ENCODE measurements at regions of chr1 and their contacts with region 1.

Region 1: GRCh38 chr1:226424228-226425003 is 16.5 kb upstream of the PARP1 start:
- DNase-seq: peak in 4 of 5 donors; percentile 13 to 38 (median 34)
- H3K4me3 ChIP-seq: no peak overlapping the region
- H3K4me3 Mint-ChIP-seq: peak overlapping the region in 2 of 8 donors; percentile 22 to 42
- H3K27ac ChIP-seq: no peak overlapping the region
- H3K27ac Mint-ChIP-seq: no peak overlapping the region
- H3K4me1 ChIP-seq: peaks cover 17% of the 10 kb centered on the region
- H3K4me1 Mint-ChIP-seq: peaks cover 7 to 18% (median 9%) of the 10 kb centered on the region in 4 donors
- H3K27me3 ChIP-seq: no peaks in the 10 kb centered on the region
- H3K27me3 Mint-ChIP-seq: peaks cover 1 to 3% of the 10 kb centered on the region in 2 donors

Region 2: DNA sequence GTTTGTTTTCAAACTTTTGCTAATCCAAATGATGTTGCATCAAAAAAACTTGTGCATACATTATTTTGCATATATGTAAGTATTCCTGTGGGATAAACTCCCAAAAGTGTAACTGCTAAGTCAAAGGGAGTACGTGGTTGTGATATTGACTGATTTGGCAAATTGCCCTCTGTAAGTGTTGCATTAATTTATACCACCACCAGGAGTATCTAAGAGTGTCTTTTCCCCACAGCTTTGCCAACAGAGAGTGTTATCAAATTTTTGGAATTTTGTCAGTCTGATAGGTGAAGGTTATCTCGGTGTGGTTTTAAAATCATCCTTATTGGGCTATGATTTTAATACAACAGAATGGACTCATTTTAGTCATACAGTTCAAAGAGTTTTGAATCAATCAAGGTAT is 13.6 kb after region 1 on chr1:
- CTCF ChIA-PET with region 1: interaction called, 82 read pairs
- POLR2A ChIA-PET with region 1: interaction called, 26 read pairs
- intact Hi-C with region 1: no loop called
- DNase-seq: no peak
- H3K4me3 ChIP-seq: no peak overlapping the region
- H3K4me3 Mint-ChIP-seq: no peak overlapping the region
- H3K27ac ChIP-seq: no peak overlapping the region
- H3K27ac Mint-ChIP-seq: no peak overlapping the region
- H3K4me1 ChIP-seq: no peaks in the 10 kb centered on the region
- H3K4me1 Mint-ChIP-seq: no peaks in the 10 kb centered on the region
- H3K27me3 ChIP-seq: no peaks in the 10 kb centered on the region
- H3K27me3 Mint-ChIP-seq: no peaks in the 10 kb centered on the region

Region 3: DNA sequence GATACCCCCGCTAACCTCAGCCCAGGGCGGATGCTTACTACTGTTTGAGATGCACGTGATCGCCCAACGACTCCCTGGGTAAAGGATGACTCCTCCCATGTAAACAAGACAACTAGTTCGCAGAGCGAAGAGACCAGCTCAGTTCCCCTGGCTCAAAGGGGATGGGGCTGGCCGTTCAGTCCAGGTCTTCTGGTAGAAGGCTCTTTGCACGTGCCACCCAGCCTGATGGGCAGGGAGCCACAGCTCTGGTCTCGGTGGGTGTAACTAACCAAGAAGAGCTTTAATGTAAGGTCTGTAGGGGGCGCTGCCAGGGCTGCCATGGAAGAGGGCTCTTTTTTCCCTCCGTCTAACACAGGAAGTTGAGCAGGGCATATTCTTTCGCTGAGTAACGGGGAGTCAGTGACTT is 32.9 kb after region 1 on chr1:
- CTCF ChIA-PET with region 1: interaction called, 28 read pairs
- POLR2A ChIA-PET with region 1: interaction called, 21 read pairs
- intact Hi-C with region 1: no loop called
- DNase-seq: peak; percentile 52 to 67 (median 61)
- H3K4me3 ChIP-seq: peak overlapping the region in 1 of 2 donors; percentile 48
- H3K4me3 Mint-ChIP-seq: peak overlapping the region; percentile 74 to 92 (median 86)
- H3K27ac ChIP-seq: no peak overlapping the region
- H3K27ac Mint-ChIP-seq: peak overlapping the region; percentile 46 to 95 (median 89)
- H3K4me1 ChIP-seq: peaks cover 7% of the 10 kb centered on the region
- H3K4me1 Mint-ChIP-seq: peaks cover 7 to 14% (median 11%) of the 10 kb centered on the region in 4 donors
- H3K27me3 ChIP-seq: no peaks in the 10 kb centered on the region
- H3K27me3 Mint-ChIP-seq: peaks cover 0 to 2% of the 10 kb centered on the region in 2 donors

Region 4: DNA sequence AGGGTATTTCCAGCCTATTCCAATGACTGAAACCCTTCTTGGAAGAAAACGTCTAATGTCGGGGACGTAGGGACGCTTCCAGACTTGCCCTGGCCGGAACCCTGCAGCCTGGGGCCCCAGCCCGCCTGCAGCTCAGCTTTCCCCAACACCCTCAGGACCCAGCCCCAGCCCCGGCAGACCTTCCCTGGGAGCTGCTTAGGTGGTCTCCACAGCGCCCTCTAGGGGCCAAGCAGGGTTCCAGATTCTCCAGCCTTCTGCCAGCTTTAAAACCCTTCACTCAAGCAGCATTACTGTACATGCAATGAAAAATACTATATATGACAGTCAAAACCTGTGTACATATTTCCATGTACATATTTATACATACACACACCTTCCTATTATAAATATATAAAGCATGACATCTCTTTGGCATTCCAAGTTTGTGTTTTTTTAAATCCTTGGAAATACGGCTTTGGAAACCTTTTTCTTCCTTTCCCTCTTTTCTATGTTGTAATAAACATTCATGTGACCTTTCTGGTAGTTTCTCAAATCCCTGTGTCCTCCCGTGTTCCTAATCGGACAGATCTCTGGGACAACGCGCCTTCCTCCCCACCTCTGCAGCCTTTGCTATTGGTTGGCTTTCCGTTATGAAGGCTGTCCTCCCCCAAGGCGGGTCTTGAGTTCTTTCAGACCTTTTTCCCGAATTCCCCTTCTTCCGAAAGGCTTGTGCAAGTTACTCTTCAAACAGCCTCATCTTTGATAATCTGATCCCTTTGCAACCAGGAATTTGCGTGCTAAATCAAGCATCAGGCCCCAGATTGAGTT is 184.5 kb after region 1 on chr1:
- CTCF ChIA-PET with region 1: interaction called, 28 read pairs
- POLR2A ChIA-PET with region 1: interaction called, 9 read pairs
- intact Hi-C with region 1: no loop called
- DNase-seq: peak; percentile 56 to 65 (median 62)
- H3K4me3 ChIP-seq: no peak overlapping the region
- H3K4me3 Mint-ChIP-seq: no peak overlapping the region
- H3K27ac ChIP-seq: no peak overlapping the region
- H3K27ac Mint-ChIP-seq: peak overlapping the region in 2 of 7 donors; percentile 8 to 55
- H3K4me1 ChIP-seq: no peaks in the 10 kb centered on the region
- H3K4me1 Mint-ChIP-seq: no peaks in the 10 kb centered on the region
- H3K27me3 ChIP-seq: no peaks in the 10 kb centered on the region
- H3K27me3 Mint-ChIP-seq: peaks cover 0 to 9% of the 10 kb centered on the region in 2 donors

Region 5: DNA sequence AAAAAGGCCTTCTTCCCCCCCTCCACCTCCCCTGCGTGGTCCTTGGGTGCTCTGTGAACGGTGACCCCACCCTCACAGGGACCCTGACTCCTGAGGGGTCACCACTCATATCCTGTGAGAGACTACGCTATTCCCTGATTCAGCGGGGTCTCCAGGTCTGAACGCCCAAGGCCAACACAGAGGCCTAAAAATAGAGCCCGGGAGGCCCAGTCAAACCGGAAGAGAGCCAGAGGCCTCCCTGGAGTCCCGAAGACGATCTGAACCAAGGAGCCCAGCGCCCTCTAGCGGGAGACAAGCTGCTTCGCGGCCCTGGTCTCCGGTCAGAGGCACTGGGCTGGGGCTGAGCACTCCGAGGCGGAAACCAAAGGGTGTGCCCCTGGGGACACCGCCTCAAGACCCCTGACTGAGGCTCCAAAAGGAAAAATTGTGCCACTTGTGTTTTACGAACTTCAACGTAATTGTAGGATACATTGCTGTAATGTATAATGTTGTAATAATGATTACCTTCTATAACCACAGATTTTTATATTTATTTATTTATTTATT is 403.6 kb after region 1 on chr1:
- CTCF ChIA-PET with region 1: interaction called, 4 read pairs
- POLR2A ChIA-PET with region 1: no interaction called
- intact Hi-C with region 1: loop called (anchors 10 kb)
- DNase-seq: peak; percentile 87 to 93 (median 90)
- H3K4me3 ChIP-seq: peak overlapping the region in 1 of 2 donors; percentile 11
- H3K4me3 Mint-ChIP-seq: peak overlapping the region; percentile 31 to 77 (median 53)
- H3K27ac ChIP-seq: peak overlapping the region; percentile 48
- H3K27ac Mint-ChIP-seq: peak overlapping the region; percentile 70 to 87 (median 80)
- H3K4me1 ChIP-seq: peaks cover 11% of the 10 kb centered on the region
- H3K4me1 Mint-ChIP-seq: peaks cover 9 to 31% (median 14%) of the 10 kb centered on the region in 4 donors
- H3K27me3 ChIP-seq: no peaks in the 10 kb centered on the region
- H3K27me3 Mint-ChIP-seq: no peaks in the 10 kb centered on the region